PC-9 (cell line): ENCODE measurements at regions of chr14 and their contacts with region 1.

Region 1: GRCh38 chr14:45610318-45610717 is 357.3 kb upstream of the MIS18BP1 start:
- DNase-seq: no peak
- H3K4me3 ChIP-seq: no peak overlapping the region
- H3K27ac ChIP-seq: no peak overlapping the region
- H3K4me1 ChIP-seq: no peaks in the 10 kb centered on the region
- H3K27me3 ChIP-seq: no peaks in the 10 kb centered on the region
- CTCF ChIP-seq: 0 out of 2 replicates have a peak, but pooled peaks have one; percentile 26

Region 2: GRCh38 chr14:45426670-45427282 is 183.5 kb before region 1 on chr14:
- CTCF ChIA-PET with region 1: no interaction called
- POLR2A ChIA-PET with region 1: no interaction called
- intact Hi-C with region 1: no loop called
- DNase-seq: peak in 1 of 2 experiments; percentile 41
- H3K4me3 ChIP-seq: no peak overlapping the region
- H3K27ac ChIP-seq: no peak overlapping the region
- H3K4me1 ChIP-seq: no peaks in the 10 kb centered on the region
- H3K27me3 ChIP-seq: no peaks in the 10 kb centered on the region
- CTCF ChIP-seq: peak; percentile 78

Region 3: DNA sequence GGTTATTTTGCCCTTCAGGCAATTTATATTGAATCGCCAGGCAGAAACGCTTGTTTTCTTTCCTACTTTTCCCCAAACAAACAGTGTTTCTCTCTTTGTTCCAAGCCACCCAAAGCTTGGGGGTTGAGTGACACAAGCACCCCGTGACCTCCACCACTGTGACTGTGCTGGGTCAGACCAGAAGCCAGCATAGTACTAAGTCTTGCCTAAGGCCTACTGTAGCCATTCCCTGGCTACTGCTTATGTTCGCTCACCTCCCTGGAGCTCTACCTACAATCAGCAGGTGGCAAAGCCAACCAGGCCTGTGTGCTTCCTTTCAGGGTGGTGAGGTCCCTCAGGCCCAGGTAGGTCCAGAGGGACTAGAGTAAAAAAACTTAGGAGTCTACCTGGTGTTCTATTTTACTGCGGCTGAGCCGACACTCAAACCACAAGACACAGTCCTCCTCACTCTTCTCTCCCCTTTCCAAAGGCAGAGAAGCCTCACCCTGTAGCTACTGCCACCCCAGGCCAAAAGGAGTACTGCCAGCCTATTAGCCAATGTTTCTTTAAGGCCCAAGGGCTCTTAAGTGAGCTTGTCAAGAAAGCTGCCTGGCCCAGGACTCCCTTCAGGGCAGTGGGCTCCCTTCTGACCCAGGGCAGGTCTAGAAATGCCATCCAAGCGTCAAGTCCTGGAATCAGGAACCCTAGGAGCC is 54.5 kb after region 1 on chr14:
- CTCF ChIA-PET with region 1: no interaction called
- POLR2A ChIA-PET with region 1: no interaction called
- intact Hi-C with region 1: no loop called
- DNase-seq: peak in 1 of 2 experiments; percentile 3
- H3K4me3 ChIP-seq: no peak overlapping the region
- H3K27ac ChIP-seq: no peak overlapping the region
- H3K4me1 ChIP-seq: no peaks in the 10 kb centered on the region
- H3K27me3 ChIP-seq: no peaks in the 10 kb centered on the region
- CTCF ChIP-seq: peak; percentile 53

Region 4: GRCh38 chr14:45810152-45810872 is 200.0 kb after region 1 on chr14:
- CTCF ChIA-PET with region 1: no interaction called
- POLR2A ChIA-PET with region 1: no interaction called
- intact Hi-C with region 1: loop called (anchors 10 kb)
- DNase-seq: no peak
- H3K4me3 ChIP-seq: no peak overlapping the region
- H3K27ac ChIP-seq: no peak overlapping the region
- H3K4me1 ChIP-seq: no peaks in the 10 kb centered on the region
- H3K27me3 ChIP-seq: no peaks in the 10 kb centered on the region
- CTCF ChIP-seq: no peak

Region 5: DNA sequence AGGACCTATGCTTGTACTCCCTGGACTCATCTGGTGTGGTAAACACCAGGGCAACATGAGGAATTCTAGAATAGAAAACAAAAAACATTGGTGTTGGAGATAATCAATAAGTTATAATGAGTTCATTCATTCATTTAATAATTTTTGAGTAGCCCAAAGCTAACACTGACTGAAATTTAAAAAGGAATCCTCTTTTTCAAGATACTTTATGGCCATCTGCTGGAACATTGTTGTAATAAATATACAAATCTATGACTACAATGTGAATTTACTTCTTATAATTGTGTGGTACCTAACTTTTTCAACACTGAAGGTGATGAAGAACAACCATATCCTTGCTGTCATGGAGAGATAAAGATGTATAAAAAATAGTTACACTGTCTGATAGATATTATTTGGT is 330.0 kb after region 1 on chr14:
- CTCF ChIA-PET with region 1: no interaction called
- POLR2A ChIA-PET with region 1: no interaction called
- intact Hi-C with region 1: loop called (anchors 10 kb)
- DNase-seq: no peak
- H3K4me3 ChIP-seq: no peak overlapping the region
- H3K27ac ChIP-seq: no peak overlapping the region
- H3K4me1 ChIP-seq: no peaks in the 10 kb centered on the region
- H3K27me3 ChIP-seq: no peaks in the 10 kb centered on the region
- CTCF ChIP-seq: no peak

Region 6: GRCh38 chr14:46344327-46344937 is 734.1 kb after region 1 on chr14:
- CTCF ChIA-PET with region 1: no interaction called
- POLR2A ChIA-PET with region 1: no interaction called
- intact Hi-C with region 1: loop called (anchors 1 kb)
- DNase-seq: peak in 1 of 2 experiments; percentile 1
- H3K4me3 ChIP-seq: no peak overlapping the region
- H3K27ac ChIP-seq: no peak overlapping the region
- H3K4me1 ChIP-seq: no peaks in the 10 kb centered on the region
- H3K27me3 ChIP-seq: no peaks in the 10 kb centered on the region
- CTCF ChIP-seq: peak; percentile 74

Region 7: GRCh38 chr14:47435331-47435965 is 1825.1 kb after region 1 on chr14:
- CTCF ChIA-PET with region 1: no interaction called
- POLR2A ChIA-PET with region 1: no interaction called
- intact Hi-C with region 1: no loop called
- DNase-seq: no peak
- H3K4me3 ChIP-seq: no peak overlapping the region
- H3K27ac ChIP-seq: no peak overlapping the region
- H3K4me1 ChIP-seq: no peaks in the 10 kb centered on the region
- H3K27me3 ChIP-seq: no peaks in the 10 kb centered on the region
- CTCF ChIP-seq: no peak